Colonic mucosa (tissue), 4 donors: ENCODE measurements at regions of chr1 and their contacts with region 1.

Region 1: DNA sequence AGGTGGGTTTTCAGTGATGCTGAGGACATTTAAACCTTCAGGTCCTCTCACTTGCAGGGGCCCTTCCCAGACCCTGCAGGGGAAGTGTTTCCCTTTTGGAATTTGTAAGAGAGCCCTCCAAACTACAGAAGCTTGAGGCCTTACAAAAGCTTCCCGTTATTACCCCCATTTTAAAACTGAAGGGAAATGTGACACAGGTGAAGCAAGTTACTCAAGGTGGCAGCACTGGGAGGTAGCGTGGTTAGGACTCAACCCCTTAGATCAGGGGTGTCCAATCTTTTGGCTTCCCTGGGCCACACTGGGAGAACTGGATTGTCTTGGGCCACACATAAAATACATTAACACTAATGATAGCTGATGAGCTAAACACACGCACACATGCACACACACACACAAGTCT is 15.9 kb upstream of the ZC3H12A start:
- DNase-seq: no peak
- H3K4me3 ChIP-seq: no peak overlapping the region
- H3K27ac ChIP-seq: no peak overlapping the region
- H3K4me1 ChIP-seq: no peaks in the 10 kb centered on the region
- H3K27me3 ChIP-seq: no peaks in the 10 kb centered on the region
- CTCF ChIP-seq: no peak

Region 2: DNA sequence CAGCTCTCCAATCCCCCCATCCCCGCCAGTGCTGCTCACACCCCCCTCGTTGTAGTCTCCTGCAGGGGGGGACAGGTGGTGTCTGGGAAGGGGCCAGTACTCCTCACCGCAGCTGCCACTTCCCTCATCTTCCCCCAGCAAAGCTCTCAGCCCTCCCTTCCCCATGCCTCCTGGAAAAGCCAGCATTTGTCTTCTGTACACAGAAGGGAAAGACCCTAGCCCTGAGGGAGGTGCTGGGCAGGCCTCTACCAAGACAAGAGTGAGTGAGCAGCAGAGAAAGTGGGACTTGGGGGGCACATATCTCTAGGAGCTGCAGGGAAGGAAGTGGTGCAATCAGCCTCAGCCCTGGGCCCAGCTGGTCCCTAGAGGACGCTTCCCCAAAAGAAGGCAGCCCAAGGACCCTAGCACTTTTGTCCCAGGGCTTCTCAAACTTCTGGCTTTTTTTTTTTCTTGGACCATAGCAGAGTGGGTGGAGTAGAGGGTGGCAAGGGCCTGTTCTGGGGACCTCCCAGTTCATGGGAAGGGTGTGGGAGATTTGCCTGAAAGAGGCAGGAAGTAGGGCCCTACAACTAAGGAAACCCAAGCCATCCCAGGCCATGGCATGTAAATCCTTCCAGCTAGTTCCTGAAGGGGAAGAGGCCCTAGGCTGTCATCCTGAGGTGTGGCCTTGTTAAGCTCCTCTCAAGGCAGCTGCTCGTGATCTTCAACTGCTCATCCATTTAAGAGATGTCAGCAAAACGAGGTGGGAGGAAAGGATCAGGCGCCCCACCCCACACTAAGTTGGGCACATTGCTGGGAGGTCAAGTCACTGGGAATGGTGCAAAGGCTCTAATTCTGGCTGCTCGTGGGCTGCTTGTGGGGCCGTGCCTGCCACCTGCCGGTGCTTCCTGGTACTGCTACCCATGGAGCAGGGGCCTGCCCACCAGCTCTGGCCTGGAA is 28.4 kb after region 1 on chr1:
- intact Hi-C with region 1: loop called (anchors 2 kb)
- DNase-seq: peak; percentile 87
- H3K4me3 ChIP-seq: no peak overlapping the region
- H3K27ac ChIP-seq: peak overlapping the region; percentile 82
- H3K4me1 ChIP-seq: peaks cover 20% of the 10 kb centered on the region
- H3K27me3 ChIP-seq: no peaks in the 10 kb centered on the region
- CTCF ChIP-seq: peak; percentile 99

Region 3: GRCh38 chr1:38451541-38451993 is 993.0 kb after region 1 on chr1:
- intact Hi-C with region 1: no loop called
- DNase-seq: no peak
- H3K4me3 ChIP-seq: no peak overlapping the region
- H3K27ac ChIP-seq: no peak overlapping the region
- H3K4me1 ChIP-seq: no peaks in the 10 kb centered on the region
- H3K27me3 ChIP-seq: no peaks in the 10 kb centered on the region
- CTCF ChIP-seq: no peak